Adrenal gland (tissue), 19 donors: ENCODE measurements at regions of chr3 and their contacts with region 1.

Region 1: DNA sequence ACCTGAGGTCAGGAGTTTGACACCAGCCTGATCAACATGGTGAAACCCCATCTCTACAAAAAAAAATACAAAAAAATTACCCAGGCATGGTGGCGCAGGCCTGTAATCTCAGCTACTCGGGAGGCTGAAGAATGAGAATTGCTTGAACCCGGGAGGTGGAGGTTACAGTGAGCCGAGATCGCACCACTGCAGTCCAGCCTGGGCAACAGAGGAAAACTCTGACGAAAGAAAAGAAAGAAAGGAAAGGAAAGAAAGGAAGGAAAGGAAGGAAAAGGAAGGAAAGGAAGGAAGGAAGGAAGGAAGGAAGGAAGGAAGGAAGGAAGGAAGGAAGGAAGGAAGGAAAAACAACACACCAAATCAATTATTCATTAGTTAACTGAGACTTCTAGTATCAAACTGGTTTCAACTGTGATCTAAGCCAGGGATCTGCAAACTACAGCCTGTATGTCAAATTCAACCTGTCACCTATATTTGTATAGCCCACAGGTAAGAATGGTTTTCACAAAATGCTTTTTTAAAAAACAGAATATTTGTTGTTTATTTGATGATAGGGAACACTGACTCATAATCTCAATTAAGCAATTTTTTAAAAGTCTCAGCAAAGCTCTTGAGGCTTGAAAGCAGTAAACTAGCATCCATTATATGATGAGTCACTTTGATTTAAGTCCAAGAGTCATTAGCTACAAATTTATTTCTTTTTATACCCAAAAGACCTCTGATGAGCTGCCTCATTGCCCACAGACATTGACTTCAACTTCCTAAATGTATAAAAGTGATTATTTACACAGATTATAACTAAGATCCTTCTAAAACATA is 127.6 kb downstream of the TBL1XR1 start:
- DNase-seq: no peak
- H3K4me3 ChIP-seq: no peak overlapping the region
- H3K27ac ChIP-seq: peak overlapping the region in 1 of 5 donors; percentile 39
- H3K4me1 ChIP-seq: peaks cover 8 to 61% of the 10 kb centered on the region in 2 donors
- H3K27me3 ChIP-seq: no peaks in the 10 kb centered on the region
- CTCF ChIP-seq: no peak
- POLR2A ChIP-seq: no peak

Region 2: GRCh38 chr3:177359593-177360357 is 290.1 kb after region 1 on chr3:
- intact Hi-C with region 1: loop called in 1 of 2 experiments (anchors 10 kb)
- DNase-seq: peak; percentile 95 to 98 (median 96)
- H3K4me3 ChIP-seq: peak overlapping the region in 2 of 4 donors; percentile 41 to 50
- H3K27ac ChIP-seq: peak overlapping the region; percentile 87 to 96 (median 94)
- H3K4me1 ChIP-seq: peaks cover 37 to 42% of the 10 kb centered on the region in 2 donors
- H3K27me3 ChIP-seq: no peaks in the 10 kb centered on the region
- CTCF ChIP-seq: peak in 1 of 6 experiments; percentile 20
- POLR2A ChIP-seq: peak; percentile 13 to 80